ENCODE measurements at regions of chr7 and their contacts with region 1.

Region 1: DNA sequence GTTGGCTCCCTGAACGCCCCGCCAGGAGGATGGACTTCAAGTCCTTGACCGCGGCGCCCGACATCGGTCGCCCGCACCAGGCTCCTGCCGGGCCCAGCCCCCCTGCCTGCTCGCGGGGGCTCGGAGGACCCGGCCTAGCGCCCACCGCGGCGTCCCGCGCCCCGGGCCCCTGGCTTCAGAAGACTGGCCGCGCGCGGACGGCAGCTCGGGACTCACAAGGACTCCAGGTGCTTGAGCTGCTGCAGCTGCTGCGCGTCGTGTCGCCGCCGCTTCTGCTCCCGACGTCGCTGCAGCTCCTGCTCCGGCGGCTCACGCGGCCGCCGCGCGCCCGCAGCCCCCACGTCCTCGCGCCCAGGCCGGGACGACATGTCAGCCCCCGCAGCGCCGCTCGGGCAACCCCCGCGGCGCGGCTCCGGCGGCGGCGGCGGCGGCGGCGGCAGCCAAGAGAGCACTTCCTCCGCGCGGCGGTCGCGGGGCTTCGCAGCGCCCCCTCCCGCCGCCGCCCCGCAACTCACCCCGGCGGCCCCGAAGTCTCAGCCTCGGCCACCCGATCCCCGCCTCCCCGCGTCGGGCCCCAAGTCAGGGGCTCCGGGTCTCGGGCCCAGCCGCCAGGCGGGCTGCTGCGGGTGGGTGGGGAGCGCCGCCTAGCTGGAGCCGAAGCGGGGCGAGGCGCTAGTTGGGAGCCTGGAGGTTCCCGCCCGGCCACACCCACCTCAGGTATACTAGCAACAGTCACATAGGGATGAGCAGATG is at the start of gene RP9:
- ATAC-seq: peak; percentile 74 to 95 (median 92)
- H3K4me3 ChIP-seq: peak within 1 kb of the TSS; percentile 68 to 95 (median 91)
- H3K27ac ChIP-seq: peak within 1 kb of the TSS; percentile 65 to 79
- H3K4me1 ChIP-seq: peaks cover 12 to 15% of the 10 kb centered on the region in 2 donors
- total RNA-seq, gene RP9: 10.3 to 30.6 (median 22.9) TPM

Region 2: DNA sequence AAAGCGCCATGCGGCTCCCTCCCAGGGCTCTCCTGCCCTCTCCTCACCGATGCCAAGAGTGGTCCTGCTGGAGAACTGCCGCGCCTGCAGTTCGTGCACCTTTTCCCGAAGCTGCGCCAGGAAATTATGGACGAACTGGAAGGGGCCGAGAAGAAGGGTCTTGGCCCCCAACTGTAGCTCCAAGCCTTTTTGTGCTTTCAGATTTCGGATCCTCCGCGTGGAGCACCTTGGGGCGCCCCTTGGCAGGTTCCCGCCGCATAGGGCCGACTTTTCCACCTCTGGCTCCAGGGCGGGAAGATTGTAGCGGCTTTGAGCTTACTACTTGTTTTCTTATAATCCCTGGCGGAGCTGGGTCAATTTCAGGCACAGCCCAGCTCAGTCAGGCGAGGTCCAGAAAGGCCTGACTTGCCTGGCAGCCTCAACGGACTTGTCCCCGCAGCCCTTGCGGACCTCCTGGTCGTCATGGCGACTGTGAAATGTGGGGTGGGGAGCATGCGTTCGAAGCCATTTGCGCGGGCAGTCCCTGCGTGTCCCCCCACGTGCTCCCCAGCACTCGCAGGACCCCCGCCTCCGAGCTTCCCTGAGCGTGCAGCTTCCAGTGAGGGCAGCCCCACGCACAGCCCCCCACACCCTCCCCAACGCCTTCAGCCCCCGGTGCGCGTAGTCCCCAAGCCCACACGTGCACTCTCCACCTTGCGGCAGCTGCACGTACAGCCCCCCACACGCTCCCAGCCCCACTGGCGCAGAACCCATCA is 347.6 kb before region 1 on chr7:
- in situ Hi-C with region 1: loop called in 1 of 9 experiments (anchors 25 kb)
- ATAC-seq: peak in 4 of 8 experiments; percentile 71 to 90 (median 81)
- H3K4me3 ChIP-seq: peak overlapping the region in 2 of 5 donors; percentile 16 to 26
- H3K27ac ChIP-seq: no peak overlapping the region
- H3K4me1 ChIP-seq: peaks cover 0 to 10% of the 10 kb centered on the region in 2 donors

Region 3: GRCh38 chr7:33789871-33790630 is 680.9 kb after region 1 on chr7:
- in situ Hi-C with region 1: no loop called
- ATAC-seq: peak in 1 of 8 experiments; percentile 9
- H3K4me3 ChIP-seq: no peak overlapping the region
- H3K27ac ChIP-seq: no peak overlapping the region
- H3K4me1 ChIP-seq: peaks cover 11 to 16% of the 10 kb centered on the region in 2 donors